GM10248 (cell line): ENCODE measurements at regions of chr2 and their contacts with region 1.

Region 1: GRCh38 chr2:30711646-30712085 is 95.6 kb downstream of the CAPN13 start:
- DNase-seq: peak; percentile 81
- CTCF ChIP-seq: peak; percentile 100

Region 2: DNA sequence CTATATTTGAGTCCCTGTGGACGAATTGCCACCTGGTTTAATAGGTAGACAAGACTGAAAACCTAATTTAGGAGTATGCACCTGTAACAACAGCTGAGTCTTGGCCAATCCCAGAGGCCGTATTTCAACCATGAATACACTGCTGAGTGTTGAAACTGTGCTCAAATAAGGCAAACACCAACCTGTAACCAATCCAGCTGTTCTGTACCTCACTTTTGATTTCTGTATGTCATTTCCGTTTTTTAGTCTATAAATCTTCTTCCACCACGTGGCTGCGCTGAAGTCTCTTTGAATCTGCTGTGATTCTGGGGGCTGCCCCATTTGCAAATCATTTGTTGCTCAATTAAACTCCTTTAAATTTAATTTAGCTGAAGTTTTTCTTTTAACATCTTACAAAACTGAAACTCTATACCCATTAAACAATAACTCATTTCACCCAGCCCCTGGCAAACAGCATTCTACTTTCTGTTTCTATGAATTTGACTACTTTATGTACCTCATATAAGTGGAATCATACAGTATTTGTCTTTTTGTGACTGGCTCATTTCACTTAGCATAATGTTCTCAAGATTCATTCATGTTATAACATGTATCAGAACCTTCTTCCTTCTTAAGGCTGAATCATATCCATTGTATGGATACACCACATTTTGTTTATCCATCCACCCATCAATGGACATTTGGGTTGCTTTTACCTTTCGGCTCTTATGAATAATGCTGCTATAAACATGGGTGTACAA is 572.4 kb before region 1 on chr2:
- CTCF ChIA-PET with region 1: interaction called, 16 read pairs
- POLR2A ChIA-PET with region 1: no interaction called
- DNase-seq: no peak
- CTCF ChIP-seq: no peak

Region 3: DNA sequence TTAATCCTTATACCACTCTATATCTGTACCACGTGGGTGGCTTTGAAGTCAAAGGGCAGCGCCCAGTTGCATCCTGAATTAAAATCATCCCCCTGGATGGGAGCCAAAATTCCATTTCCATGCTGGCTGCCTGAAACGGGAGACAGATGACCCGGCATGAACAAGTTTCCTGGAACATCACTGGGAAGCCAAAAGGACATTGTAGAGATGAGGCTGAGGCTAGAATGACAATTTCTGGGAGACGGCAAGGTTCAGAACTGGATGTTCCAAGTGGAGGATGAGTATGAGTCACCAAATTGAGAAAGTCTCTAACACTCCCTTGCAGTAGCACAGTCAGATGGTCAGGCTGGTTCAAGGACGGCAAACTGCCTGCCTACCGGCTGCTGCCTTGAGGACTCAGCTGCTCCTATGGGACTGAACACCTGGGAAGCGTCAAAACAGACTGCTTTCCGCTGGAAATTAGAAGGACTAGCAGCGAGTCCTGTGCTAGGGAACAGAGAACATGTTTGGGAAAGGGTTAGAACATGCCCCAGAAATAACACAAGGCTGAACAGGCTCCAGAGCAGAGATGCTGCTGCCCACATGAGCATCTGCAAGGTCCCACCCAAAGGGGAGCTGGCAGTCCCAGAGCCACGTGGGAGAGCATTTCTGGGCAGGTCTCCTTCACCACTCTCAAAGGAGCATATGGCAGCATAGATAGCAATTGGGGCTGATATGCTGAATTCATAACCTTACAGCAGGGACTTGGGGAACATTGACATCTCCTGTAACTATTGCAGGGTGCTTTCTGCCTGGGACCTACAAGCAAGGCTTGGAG is 532.8 kb before region 1 on chr2:
- CTCF ChIA-PET with region 1: interaction called, 19 read pairs
- POLR2A ChIA-PET with region 1: no interaction called
- DNase-seq: no peak
- CTCF ChIP-seq: no peak

Region 4: GRCh38 chr2:30225131-30225762 is 486.4 kb before region 1 on chr2:
- CTCF ChIA-PET with region 1: interaction called, 15 read pairs
- POLR2A ChIA-PET with region 1: no interaction called
- DNase-seq: peak; percentile 55
- CTCF ChIP-seq: no peak

Region 5: GRCh38 chr2:30686000-30686399 is 25.7 kb before region 1 on chr2:
- CTCF ChIA-PET with region 1: interaction called, 242 read pairs
- POLR2A ChIA-PET with region 1: no interaction called
- DNase-seq: no peak
- CTCF ChIP-seq: no peak

Region 6: DNA sequence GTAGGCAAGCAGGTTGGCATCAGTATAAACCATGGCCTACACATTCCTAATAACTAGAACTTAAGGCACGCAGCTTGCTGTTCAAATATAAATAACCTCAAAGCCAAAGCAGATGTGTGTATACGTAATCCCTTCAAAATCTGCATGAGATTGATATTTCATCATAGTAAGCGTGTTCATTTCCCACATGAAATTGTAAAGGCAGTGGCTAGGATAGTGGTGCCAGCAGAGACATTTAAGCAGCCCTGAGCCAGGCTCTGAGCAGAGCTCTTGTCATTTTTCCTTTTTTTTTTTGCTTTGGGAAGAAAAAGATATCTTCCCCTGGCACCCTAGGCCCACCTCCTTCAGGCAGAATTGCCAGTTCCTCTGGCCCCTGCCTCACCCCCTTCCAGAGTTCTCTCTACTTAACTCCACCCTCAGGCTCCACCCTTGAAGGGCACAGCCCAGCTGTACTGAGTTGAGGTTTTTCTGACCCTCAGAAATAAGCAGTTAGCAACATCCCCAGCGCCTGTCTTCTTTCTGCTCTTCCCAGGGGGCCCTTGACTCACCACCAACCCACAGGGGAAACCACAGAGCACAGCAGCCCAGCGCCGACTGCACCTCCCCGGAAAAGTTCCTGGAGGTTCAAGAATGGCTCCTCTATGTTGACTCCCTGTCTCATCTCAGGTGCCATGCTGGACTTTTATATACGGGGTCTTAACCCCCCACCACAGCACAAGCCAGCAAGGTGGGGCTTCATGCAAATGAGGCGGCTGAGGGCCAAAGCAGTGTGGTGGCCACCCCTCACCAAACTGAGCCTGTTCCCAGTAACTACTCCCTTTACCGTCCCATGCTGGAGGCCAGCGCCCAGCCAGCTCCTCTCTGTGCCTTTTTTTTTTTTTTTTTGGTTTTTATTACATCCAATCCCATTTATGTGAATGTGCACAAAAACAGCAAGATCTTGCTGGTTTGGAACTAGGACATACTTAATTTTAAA is 607.0 kb after region 1 on chr2:
- CTCF ChIA-PET with region 1: interaction called, 13 read pairs
- POLR2A ChIA-PET with region 1: no interaction called
- DNase-seq: no peak
- CTCF ChIP-seq: no peak